ENCODE measurements at regions of chr1 and their contacts with region 1.

Region 1: DNA sequence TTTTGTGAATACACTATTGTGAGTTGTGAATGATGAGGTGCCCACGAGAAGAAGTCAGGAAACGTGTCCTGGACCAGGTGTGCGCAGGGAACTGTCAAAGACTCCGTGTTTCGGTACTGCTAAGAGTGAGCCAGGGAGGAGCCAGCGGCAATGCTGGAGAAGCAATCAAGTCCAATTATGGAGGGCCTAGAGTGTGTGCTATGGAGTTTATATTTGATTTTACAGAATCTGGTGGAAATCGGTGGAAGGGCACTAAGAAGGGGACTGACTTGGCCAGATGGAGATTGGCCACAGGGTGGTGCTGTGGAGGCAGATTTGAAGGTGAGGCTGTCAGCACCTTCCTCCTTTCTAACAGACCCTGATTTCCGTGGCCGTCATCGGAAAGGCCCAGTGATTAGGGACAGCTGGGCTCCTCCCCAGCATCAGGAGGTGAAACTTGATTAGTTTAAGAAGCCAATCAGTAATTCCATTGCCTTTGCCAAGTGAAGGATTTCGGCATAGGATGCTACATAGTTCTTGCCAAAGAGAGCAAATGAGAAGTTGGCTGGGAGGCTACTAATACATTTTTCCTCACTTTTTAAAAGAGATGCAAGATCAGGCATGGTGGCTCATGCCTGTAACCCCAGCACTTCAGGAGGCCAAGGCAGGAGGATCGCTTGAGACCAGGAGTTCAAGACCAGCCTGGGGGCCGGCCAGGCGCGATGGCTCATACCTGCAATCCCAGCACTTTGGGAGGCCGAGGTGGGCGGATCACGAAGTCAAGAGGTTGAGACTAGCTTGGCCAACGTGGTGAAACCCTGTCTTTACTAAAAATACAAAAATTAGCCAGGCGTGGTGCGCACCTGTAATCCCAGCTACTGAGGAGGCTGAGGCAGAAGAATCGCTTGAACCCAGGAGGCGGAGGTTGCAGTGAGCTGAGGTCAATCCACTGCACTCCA is 7.0 kb downstream of the PTCH2 start:
- DNase-seq: peak; percentile 55
- ATAC-seq: peak; percentile 98
- H3K4me3 ChIP-seq: no peak overlapping the region
- H3K27ac ChIP-seq: no peak overlapping the region
- H3K4me1 ChIP-seq: no peaks in the 10 kb centered on the region
- H3K27me3 ChIP-seq: no peaks in the 10 kb centered on the region
- CTCF ChIP-seq: peak; percentile 84 to 96 (median 91)
- EP300 ChIP-seq: no peak
- POLR2A ChIP-seq: no peak
- RAD21 ChIP-seq: peak; percentile 73

Region 2: DNA sequence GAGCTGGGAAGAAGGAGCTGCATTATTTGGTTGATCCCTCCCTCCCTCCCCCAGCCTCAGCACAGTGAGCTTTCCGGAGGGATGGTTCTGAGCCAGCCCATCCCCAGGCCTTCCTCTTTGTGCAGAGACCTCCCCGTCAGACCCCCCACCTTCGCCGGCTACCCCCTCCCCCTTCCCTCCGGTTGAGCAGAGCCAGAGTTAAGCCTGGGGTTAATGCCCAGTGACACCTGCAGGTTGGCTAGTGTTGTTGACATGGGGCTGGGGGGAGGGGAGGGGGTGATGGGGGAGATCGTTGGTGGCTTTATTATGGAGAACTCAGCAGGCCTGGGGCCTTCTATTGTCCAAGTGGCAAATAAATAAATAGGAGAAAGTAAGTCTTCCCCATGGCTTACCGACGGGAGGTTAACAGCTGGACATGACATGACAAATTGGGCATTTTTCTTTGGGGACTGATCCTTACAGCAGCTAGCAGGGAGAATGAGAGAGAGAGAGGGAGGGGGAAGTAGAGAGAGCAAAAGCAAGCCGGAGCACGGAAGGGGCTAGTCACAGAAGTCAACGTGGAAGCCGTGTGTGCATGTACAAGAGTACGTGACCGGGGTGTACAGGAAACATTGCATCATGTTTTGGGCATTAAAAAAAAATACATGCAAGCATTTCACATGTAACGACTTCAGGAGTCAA is 292.8 kb before region 1 on chr1:
- CTCF ChIA-PET with region 1: no interaction called
- POLR2A ChIA-PET with region 1: no interaction called
- RAD21 ChIA-PET with region 1: no interaction called
- SMC1A ChIA-PET with region 1: no interaction called
- in situ Hi-C with region 1: no loop called
- intact Hi-C with region 1: no loop called
- DNase-seq: no peak
- ATAC-seq: no peak
- H3K4me3 ChIP-seq: no peak overlapping the region
- H3K27ac ChIP-seq: no peak overlapping the region
- H3K4me1 ChIP-seq: no peaks in the 10 kb centered on the region
- H3K27me3 ChIP-seq: peaks cover 3 to 9% of the 10 kb centered on the region in 2 experiments; a peak in 2 of 4 replicates
- CTCF ChIP-seq: no peak
- EP300 ChIP-seq: no peak
- POLR2A ChIP-seq: no peak
- RAD21 ChIP-seq: no peak

Region 3: DNA sequence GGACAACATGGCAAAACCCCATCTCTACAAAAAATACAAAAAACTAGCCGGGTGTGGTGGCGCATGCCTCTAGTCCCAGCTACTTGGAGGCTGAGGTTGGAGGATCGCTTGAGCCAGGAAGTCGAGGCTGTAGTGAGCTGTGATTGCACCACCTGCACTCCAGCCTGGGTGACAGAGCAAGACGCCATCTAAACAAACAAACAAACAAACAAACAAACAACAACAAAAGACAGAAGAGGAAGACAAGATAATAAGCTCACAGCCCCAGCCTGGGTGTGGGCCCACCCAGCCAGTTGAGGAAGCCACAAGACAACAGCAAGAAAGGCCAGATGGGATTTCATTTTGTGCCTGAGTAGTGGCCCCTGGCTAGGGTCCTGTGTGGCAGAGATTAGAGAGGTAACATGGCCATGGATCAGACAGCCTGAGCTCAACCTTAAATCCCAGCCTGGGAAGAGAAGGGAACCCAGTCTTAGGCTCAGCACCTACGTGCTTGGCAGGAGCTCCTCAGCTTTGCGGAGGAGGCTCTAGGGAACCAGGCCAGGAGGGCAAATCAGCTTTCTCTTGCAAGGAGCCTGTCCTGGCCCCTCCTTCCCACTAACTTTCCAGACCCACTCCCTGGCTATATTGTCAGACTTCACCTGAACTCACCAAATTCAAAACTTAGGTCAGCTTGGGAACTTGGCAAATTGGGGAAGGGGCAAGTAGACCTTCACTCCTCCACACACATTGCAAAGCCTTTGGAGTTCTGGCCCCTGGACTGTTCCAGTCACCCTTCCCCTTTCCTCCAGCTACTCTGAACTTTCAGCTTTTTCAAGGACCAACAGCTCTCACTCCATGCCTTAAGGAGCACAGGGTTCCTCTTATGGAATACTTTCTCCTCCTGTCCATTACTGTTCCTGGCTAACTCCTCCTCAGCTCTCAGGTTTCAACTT is 43.0 kb before region 1 on chr1:
- CTCF ChIA-PET with region 1: interaction called, 8 read pairs
- POLR2A ChIA-PET with region 1: interaction called, 3 read pairs
- RAD21 ChIA-PET with region 1: interaction called, 5 read pairs
- SMC1A ChIA-PET with region 1: interaction called, 3 read pairs
- in situ Hi-C with region 1: no loop called
- intact Hi-C with region 1: loop called (anchors 2 kb)
- DNase-seq: no peak
- ATAC-seq: no peak
- H3K4me3 ChIP-seq: no peak overlapping the region
- H3K27ac ChIP-seq: no peak overlapping the region
- H3K4me1 ChIP-seq: no peaks in the 10 kb centered on the region
- H3K27me3 ChIP-seq: no peaks in the 10 kb centered on the region
- CTCF ChIP-seq: no peak
- EP300 ChIP-seq: no peak
- POLR2A ChIP-seq: no peak
- RAD21 ChIP-seq: no peak

Region 4: DNA sequence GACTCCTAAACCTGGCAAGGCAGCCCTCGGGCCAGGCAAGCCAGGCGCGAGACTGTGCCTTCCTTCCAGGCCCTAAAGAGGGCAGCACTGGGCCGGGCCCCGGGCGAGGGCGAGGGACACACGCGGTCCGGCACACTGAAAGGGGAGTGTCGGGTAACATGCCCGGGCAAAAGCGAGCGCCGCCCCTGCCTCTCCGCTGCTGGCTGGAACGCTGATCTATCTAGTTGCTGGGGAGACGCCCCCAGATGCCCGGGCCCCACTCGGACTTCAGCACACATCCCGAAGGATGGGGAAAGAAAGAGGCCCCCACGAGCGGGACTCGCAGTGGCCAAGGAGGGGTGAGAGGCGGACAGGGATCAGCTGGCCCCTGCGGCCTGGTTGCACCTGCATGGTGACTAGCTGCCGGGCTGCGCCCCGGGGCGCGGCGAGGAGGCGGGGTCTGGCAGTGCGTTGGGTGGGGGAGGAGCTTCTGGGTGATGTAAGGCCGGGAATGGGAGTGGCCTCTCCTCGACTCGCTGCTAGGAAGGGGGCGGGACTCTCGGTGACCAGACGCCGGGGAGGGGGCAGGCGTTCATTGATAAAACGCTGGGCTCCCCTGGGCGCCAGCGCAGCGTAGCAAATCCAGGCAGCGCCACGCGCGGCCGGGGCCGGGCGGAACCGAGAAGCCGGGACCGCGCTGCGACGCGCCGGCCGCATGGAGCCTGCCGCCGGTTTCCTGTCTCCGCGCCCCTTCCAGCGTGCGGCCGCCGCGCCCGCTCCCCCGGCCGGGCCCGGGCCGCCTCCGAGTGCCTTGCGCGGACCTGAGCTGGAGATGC is 36.0 kb before region 1 on chr1 and contains the start of gene PLK3:
- CTCF ChIA-PET with region 1: interaction called, 10 read pairs
- POLR2A ChIA-PET with region 1: interaction called, 4 read pairs
- RAD21 ChIA-PET with region 1: interaction called, 6 read pairs
- SMC1A ChIA-PET with region 1: interaction called, 5 read pairs
- in situ Hi-C with region 1: no loop called
- intact Hi-C with region 1: no loop called
- DNase-seq: peak; percentile 91
- ATAC-seq: peak; percentile 91
- H3K4me3 ChIP-seq: peak within 1 kb of the TSS; percentile 94
- H3K27ac ChIP-seq: peak within 1 kb of the TSS; percentile 84
- H3K4me1 ChIP-seq: peaks cover 11% of the 10 kb centered on the region
- H3K27me3 ChIP-seq: no peaks in the 10 kb centered on the region
- CTCF ChIP-seq: peak; percentile 92 to 97 (median 95)
- EP300 ChIP-seq: no peak
- POLR2A ChIP-seq: peak; percentile 90
- RAD21 ChIP-seq: peak; percentile 86
- polyA plus RNA-seq, gene PLK3: 1.5 to 1.9 TPM

Region 5: DNA sequence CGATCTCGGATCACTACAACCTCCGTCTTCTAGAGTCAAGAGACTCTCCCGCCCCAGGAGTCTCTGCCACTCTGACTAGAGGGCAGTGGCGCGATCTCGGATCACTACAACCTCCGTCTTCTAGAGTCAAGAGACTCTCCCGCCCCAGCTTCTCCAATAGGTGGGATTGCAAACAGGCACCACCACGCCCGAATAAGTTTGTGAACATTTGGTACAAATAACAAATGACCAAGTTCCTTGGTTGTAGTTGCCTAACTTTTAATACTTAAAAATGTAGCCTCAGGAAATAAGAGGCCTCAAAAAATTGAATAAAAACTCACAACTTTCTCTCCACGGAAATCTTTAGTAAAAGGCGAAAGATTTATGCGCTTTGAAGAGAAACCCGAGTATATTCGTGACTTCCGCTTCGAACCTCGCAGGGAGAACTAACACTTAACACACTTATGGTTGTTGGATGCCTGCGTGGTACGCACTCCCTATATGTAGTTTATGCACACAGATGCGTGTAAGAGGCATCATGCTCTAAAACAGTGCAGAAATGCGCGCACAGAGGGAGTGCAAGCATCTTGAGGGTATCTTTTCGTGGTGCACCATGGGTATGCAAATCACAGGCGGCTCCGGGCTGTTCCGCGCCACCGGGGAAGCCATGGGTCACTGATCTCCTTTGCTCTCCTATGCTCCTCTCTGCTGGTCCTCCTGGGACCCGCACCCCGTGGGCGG is 16.2 kb before region 1 on chr1:
- CTCF ChIA-PET with region 1: interaction called, 21 read pairs
- POLR2A ChIA-PET with region 1: interaction called, 4 read pairs
- RAD21 ChIA-PET with region 1: interaction called, 5 read pairs
- SMC1A ChIA-PET with region 1: interaction called, 9 read pairs
- in situ Hi-C with region 1: no loop called
- intact Hi-C with region 1: no loop called
- DNase-seq: peak; percentile 90
- ATAC-seq: peak; percentile 96
- H3K4me3 ChIP-seq: peak overlapping the region; percentile 36; the same call in 1 of the 2 replicates
- H3K27ac ChIP-seq: peak overlapping the region; percentile 100
- H3K4me1 ChIP-seq: peaks cover 6% of the 10 kb centered on the region
- H3K27me3 ChIP-seq: no peaks in the 10 kb centered on the region
- CTCF ChIP-seq: peak in 2 of 3 experiments; percentile 15 to 29; a peak in 2 of 6 replicates
- EP300 ChIP-seq: peak in 1 of 2 experiments; percentile 1; a peak in 1 of 4 replicates
- POLR2A ChIP-seq: peak; percentile 100
- RAD21 ChIP-seq: peak; percentile 26; the same call in 1 of the 2 replicates

Region 6: GRCh38 chr1:44848456-44849181 is 12.6 kb after region 1 on chr1:
- CTCF ChIA-PET with region 1: interaction called, 15 read pairs
- POLR2A ChIA-PET with region 1: interaction called, 3 read pairs
- RAD21 ChIA-PET with region 1: no interaction called
- SMC1A ChIA-PET with region 1: interaction called, 4 read pairs
- in situ Hi-C with region 1: no loop called
- intact Hi-C with region 1: no loop called
- DNase-seq: no peak
- ATAC-seq: no peak
- H3K4me3 ChIP-seq: no peak overlapping the region
- H3K27ac ChIP-seq: no peak overlapping the region
- H3K4me1 ChIP-seq: peaks cover 3% of the 10 kb centered on the region; the same call in 1 of the 2 replicates
- H3K27me3 ChIP-seq: no peaks in the 10 kb centered on the region
- CTCF ChIP-seq: no peak
- EP300 ChIP-seq: no peak
- POLR2A ChIP-seq: no peak
- RAD21 ChIP-seq: no peak

Region 7: GRCh38 chr1:44985747-44986359 is 149.8 kb after region 1 on chr1:
- CTCF ChIA-PET with region 1: interaction called, 4 read pairs
- POLR2A ChIA-PET with region 1: no interaction called
- RAD21 ChIA-PET with region 1: no interaction called
- SMC1A ChIA-PET with region 1: interaction called, 4 read pairs
- in situ Hi-C with region 1: no loop called
- intact Hi-C with region 1: loop called (anchors 10 kb)
- DNase-seq: no peak
- ATAC-seq: peak; percentile 20
- H3K4me3 ChIP-seq: peak overlapping the region; percentile 86
- H3K27ac ChIP-seq: peak overlapping the region; percentile 56
- H3K4me1 ChIP-seq: peaks cover 9% of the 10 kb centered on the region
- H3K27me3 ChIP-seq: no peaks in the 10 kb centered on the region
- CTCF ChIP-seq: no peak
- EP300 ChIP-seq: no peak
- POLR2A ChIP-seq: no peak
- RAD21 ChIP-seq: no peak